CD4-positive, alpha-beta memory T cell (primary cell): ENCODE measurements at regions of chr4 and their contacts with region 1.

Region 1: GRCh38 chr4:3106339-3107186 is 32.1 kb downstream of the HTT start:
- DNase-seq: peak; percentile 65 to 83 (median 70)
- H3K4me3 ChIP-seq: no peak overlapping the region
- H3K4me3 Mint-ChIP-seq: peak overlapping the region in 1 of 8 donors; percentile 26
- H3K27ac ChIP-seq: no peak overlapping the region
- H3K27ac Mint-ChIP-seq: peak overlapping the region; percentile 1 to 87 (median 42)
- H3K4me1 ChIP-seq: peaks cover 3% of the 10 kb centered on the region
- H3K4me1 Mint-ChIP-seq: peaks cover 7 to 12% (median 9%) of the 10 kb centered on the region in 4 donors
- H3K27me3 ChIP-seq: no peaks in the 10 kb centered on the region
- H3K27me3 Mint-ChIP-seq: no peaks in the 10 kb centered on the region

Region 2: GRCh38 chr4:3122081-3122563 is 15.6 kb after region 1 on chr4:
- CTCF ChIA-PET with region 1: interaction called, 25 read pairs
- POLR2A ChIA-PET with region 1: interaction called, 5 read pairs
- intact Hi-C with region 1: no loop called
- DNase-seq: no peak
- H3K4me3 ChIP-seq: no peak overlapping the region
- H3K4me3 Mint-ChIP-seq: peak overlapping the region in 2 of 8 donors; percentile 21 to 26
- H3K27ac ChIP-seq: no peak overlapping the region
- H3K27ac Mint-ChIP-seq: peak overlapping the region in 6 of 7 donors; percentile 20 to 85 (median 56)
- H3K4me1 ChIP-seq: peaks cover 5% of the 10 kb centered on the region
- H3K4me1 Mint-ChIP-seq: peaks cover 6 to 17% (median 10%) of the 10 kb centered on the region in 4 donors
- H3K27me3 ChIP-seq: no peaks in the 10 kb centered on the region
- H3K27me3 Mint-ChIP-seq: no peaks in the 10 kb centered on the region

Region 3: GRCh38 chr4:3193531-3194203 is 87.1 kb after region 1 on chr4:
- CTCF ChIA-PET with region 1: interaction called, 3 read pairs
- POLR2A ChIA-PET with region 1: no interaction called
- intact Hi-C with region 1: loop called (anchors 5 kb)
- DNase-seq: peak in 4 of 5 donors; percentile 40 to 48 (median 46)
- H3K4me3 ChIP-seq: no peak overlapping the region
- H3K4me3 Mint-ChIP-seq: no peak overlapping the region
- H3K27ac ChIP-seq: no peak overlapping the region
- H3K27ac Mint-ChIP-seq: peak overlapping the region in 3 of 7 donors; percentile 18 to 49 (median 19)
- H3K4me1 ChIP-seq: peaks cover 52% of the 10 kb centered on the region
- H3K4me1 Mint-ChIP-seq: peaks cover 42 to 68% (median 56%) of the 10 kb centered on the region in 4 donors
- H3K27me3 ChIP-seq: no peaks in the 10 kb centered on the region
- H3K27me3 Mint-ChIP-seq: no peaks in the 10 kb centered on the region

Region 4: DNA sequence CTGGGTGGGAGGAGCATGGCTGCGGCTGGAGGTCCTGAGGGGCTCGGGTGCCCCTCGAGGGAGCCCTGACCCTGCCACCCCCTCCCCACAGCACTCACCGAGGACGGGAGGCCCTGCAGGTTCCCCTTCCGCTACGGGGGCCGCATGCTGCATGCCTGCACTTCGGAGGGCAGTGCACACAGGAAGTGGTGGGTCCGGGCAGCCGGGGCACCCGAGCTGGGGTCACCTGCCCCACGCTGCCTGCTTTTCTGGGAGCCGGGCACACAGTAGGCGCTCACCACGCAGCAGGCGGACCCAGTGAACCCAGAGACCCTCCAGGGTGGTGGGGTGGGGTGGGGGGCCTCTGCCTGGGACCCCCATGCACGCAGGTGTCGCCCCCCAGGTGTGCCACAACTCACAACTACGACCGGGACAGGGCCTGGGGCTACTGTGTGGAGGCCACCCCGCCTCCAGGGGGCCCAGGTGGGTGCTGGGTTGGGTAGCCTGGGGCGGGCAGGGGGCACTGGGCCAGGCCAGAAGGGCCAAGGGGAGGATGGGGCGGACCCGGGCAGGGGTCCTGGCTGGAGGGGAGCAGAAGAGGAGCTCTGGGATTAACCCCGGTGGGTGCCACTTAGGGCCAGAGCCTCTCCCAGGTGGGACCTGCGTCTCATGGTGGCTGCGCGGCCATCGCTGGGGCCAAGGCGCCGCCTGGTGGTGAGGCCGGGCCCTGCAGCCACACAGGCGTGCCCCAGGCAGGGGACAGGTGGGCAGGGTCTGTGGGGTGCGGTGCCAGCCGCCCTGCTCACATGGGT is 336.6 kb after region 1 on chr4:
- CTCF ChIA-PET with region 1: interaction called, 23 read pairs
- POLR2A ChIA-PET with region 1: no interaction called
- intact Hi-C with region 1: no loop called
- DNase-seq: peak in 4 of 5 donors; percentile 58 to 69 (median 61)
- H3K4me3 ChIP-seq: no peak overlapping the region
- H3K4me3 Mint-ChIP-seq: no peak overlapping the region
- H3K27ac ChIP-seq: no peak overlapping the region
- H3K27ac Mint-ChIP-seq: no peak overlapping the region
- H3K4me1 ChIP-seq: no peaks in the 10 kb centered on the region
- H3K4me1 Mint-ChIP-seq: no peaks in the 10 kb centered on the region
- H3K27me3 ChIP-seq: no peaks in the 10 kb centered on the region
- H3K27me3 Mint-ChIP-seq: no peaks in the 10 kb centered on the region